ENCODE measurements at regions of chr6 and their contacts with region 1.

Region 1: GRCh38 chr6:27864906-27865849 is 47.0 kb downstream of the OR2B2 start:
- DNase-seq: peak; percentile 68
- ATAC-seq: peak; percentile 85
- H3K4me3 Mint-ChIP-seq: peak overlapping the region; percentile 98
- H3K27ac Mint-ChIP-seq: peak overlapping the region; percentile 99
- H3K4me1 Mint-ChIP-seq: peaks cover 48% of the 10 kb centered on the region
- H3K27me3 Mint-ChIP-seq: no peaks in the 10 kb centered on the region
- CTCF ChIP-seq: no peak

Region 2: DNA sequence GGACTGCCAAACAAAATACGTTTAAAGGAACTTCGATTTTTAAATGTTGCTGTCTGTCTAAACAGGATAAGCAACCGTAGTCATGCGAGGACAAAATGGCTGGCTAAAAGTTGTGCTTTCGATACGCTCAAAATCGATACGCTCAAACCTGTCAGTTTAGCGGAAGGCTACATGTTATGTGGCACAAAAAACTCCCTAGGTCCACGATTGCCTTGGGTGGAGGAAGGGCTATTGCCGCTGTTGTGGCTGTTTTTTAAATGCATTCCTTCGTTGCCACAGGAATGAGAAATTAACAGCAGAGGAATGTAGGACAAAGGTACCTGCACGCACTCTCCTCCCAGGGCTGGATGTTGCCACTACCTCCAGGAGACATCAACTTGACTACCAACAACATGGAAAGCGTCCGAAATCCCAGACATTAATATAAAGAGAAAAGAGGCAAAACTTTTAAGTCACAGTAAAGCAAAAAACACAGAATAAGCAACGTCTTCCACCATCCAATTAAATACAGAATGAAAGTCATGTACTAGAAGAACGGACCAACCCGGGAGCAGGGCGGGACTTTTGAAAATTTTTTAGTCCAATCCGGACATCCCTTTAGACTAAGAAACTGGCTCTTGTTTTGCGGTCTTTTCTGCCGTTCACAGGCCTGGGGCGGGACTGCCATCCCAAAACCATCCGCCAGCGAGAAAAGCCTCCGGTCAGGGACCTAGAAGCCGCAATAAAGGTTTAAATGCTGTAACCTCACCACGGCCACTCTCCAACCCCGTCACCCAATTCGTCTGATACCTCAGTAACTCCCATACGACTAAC is 1810.1 kb before region 1 on chr6:
- CTCF ChIA-PET with region 1: no interaction called
- POLR2A ChIA-PET with region 1: interaction called, 15 read pairs
- intact Hi-C with region 1: no loop called
- DNase-seq: peak; percentile 63
- ATAC-seq: peak; percentile 65
- H3K4me3 Mint-ChIP-seq: peak overlapping the region; percentile 97
- H3K27ac Mint-ChIP-seq: peak overlapping the region; percentile 100
- H3K4me1 Mint-ChIP-seq: peaks cover 20% of the 10 kb centered on the region
- H3K27me3 Mint-ChIP-seq: no peaks in the 10 kb centered on the region
- CTCF ChIP-seq: no peak

Region 3: GRCh38 chr6:26363882-26364701 is 1501.1 kb before region 1 on chr6:
- CTCF ChIA-PET with region 1: no interaction called
- POLR2A ChIA-PET with region 1: interaction called, 16 read pairs
- intact Hi-C with region 1: no loop called
- DNase-seq: no peak
- ATAC-seq: no peak
- H3K4me3 Mint-ChIP-seq: no peak overlapping the region
- H3K27ac Mint-ChIP-seq: no peak overlapping the region
- H3K4me1 Mint-ChIP-seq: peaks cover 39% of the 10 kb centered on the region
- H3K27me3 Mint-ChIP-seq: peaks cover 7% of the 10 kb centered on the region
- CTCF ChIP-seq: no peak

Region 4: GRCh38 chr6:27132532-27133280 is 732.5 kb before region 1 on chr6:
- CTCF ChIA-PET with region 1: no interaction called
- POLR2A ChIA-PET with region 1: interaction called, 40 read pairs
- intact Hi-C with region 1: loop called (anchors 1 kb)
- DNase-seq: peak; percentile 77
- ATAC-seq: peak; percentile 84
- H3K4me3 Mint-ChIP-seq: no peak overlapping the region
- H3K27ac Mint-ChIP-seq: no peak overlapping the region
- H3K4me1 Mint-ChIP-seq: peaks cover 14% of the 10 kb centered on the region
- H3K27me3 Mint-ChIP-seq: no peaks in the 10 kb centered on the region
- CTCF ChIP-seq: no peak

Region 5: DNA sequence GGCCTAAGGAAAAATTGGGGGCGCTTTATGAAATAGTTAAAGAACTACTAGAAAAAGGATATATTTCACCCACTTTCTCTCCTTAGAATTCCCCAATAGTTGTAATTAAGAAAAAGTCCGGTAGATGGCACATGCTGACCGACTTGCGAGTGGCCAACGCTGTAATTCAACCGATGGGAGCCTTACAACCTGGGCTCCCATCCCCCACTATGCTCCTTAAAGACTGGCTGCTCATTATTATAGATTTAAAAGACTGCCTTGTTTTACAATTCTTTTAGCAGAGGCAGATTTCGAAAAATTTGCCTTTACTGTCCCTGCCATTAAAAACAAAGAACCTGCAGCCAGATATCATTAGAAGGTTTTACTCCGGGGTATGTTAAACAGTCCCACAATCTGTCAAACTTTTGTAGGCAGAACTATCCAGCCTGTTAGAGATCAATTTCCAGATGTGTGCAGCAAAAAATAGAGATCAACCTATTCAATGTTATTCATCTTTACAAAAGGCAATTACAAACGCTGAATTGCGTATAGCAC is 676.2 kb before region 1 on chr6:
- CTCF ChIA-PET with region 1: no interaction called
- POLR2A ChIA-PET with region 1: no interaction called
- intact Hi-C with region 1: loop called (anchors 1 kb)
- DNase-seq: no peak
- ATAC-seq: peak; percentile 80
- H3K4me3 Mint-ChIP-seq: peak overlapping the region; percentile 83
- H3K27ac Mint-ChIP-seq: peak overlapping the region; percentile 19
- H3K4me1 Mint-ChIP-seq: peaks cover 8% of the 10 kb centered on the region
- H3K27me3 Mint-ChIP-seq: peaks cover 2% of the 10 kb centered on the region
- CTCF ChIP-seq: no peak

Region 6: GRCh38 chr6:27726620-27727023 is 138.6 kb before region 1 on chr6:
- CTCF ChIA-PET with region 1: no interaction called
- POLR2A ChIA-PET with region 1: no interaction called
- intact Hi-C with region 1: no loop called
- DNase-seq: no peak
- ATAC-seq: no peak
- H3K4me3 Mint-ChIP-seq: no peak overlapping the region
- H3K27ac Mint-ChIP-seq: no peak overlapping the region
- H3K4me1 Mint-ChIP-seq: no peaks in the 10 kb centered on the region
- H3K27me3 Mint-ChIP-seq: peaks cover 24% of the 10 kb centered on the region
- CTCF ChIP-seq: no peak

Region 7: GRCh38 chr6:27851440-27851839 is 13.7 kb before region 1 on chr6:
- CTCF ChIA-PET with region 1: no interaction called
- POLR2A ChIA-PET with region 1: interaction called, 15 read pairs
- intact Hi-C with region 1: no loop called
- DNase-seq: no peak
- ATAC-seq: no peak
- H3K4me3 Mint-ChIP-seq: no peak overlapping the region
- H3K27ac Mint-ChIP-seq: no peak overlapping the region
- H3K4me1 Mint-ChIP-seq: peaks cover 7% of the 10 kb centered on the region
- H3K27me3 Mint-ChIP-seq: no peaks in the 10 kb centered on the region
- CTCF ChIP-seq: no peak

Region 8: GRCh38 chr6:28880894-28881780 is 1016.0 kb after region 1 on chr6:
- CTCF ChIA-PET with region 1: no interaction called
- POLR2A ChIA-PET with region 1: interaction called, 17 read pairs
- intact Hi-C with region 1: no loop called
- DNase-seq: peak; percentile 48
- ATAC-seq: peak; percentile 39
- H3K4me3 Mint-ChIP-seq: peak overlapping the region; percentile 75
- H3K27ac Mint-ChIP-seq: peak overlapping the region; percentile 83
- H3K4me1 Mint-ChIP-seq: peaks cover 21% of the 10 kb centered on the region
- H3K27me3 Mint-ChIP-seq: peaks cover 51% of the 10 kb centered on the region
- CTCF ChIP-seq: no peak